Naive thymus-derived CD8-positive, alpha-beta T cell (primary cell): ENCODE measurements at regions of chr5 and their contacts with region 1.

Region 1: GRCh38 chr5:157253547-157253946 is 12.4 kb upstream of the CYFIP2 start:
- DNase-seq: peak in 1 of 10 donors; percentile 15
- ATAC-seq: no peak
- H3K4me3 Mint-ChIP-seq: peak overlapping the region; percentile 40 to 83 (median 72)
- H3K27ac Mint-ChIP-seq: peak overlapping the region; percentile 89 to 97 (median 92)
- H3K4me1 Mint-ChIP-seq: peaks cover 43 to 97% (median 94%) of the 10 kb centered on the region in 4 donors
- H3K27me3 Mint-ChIP-seq: no peaks in the 10 kb centered on the region

Region 2: DNA sequence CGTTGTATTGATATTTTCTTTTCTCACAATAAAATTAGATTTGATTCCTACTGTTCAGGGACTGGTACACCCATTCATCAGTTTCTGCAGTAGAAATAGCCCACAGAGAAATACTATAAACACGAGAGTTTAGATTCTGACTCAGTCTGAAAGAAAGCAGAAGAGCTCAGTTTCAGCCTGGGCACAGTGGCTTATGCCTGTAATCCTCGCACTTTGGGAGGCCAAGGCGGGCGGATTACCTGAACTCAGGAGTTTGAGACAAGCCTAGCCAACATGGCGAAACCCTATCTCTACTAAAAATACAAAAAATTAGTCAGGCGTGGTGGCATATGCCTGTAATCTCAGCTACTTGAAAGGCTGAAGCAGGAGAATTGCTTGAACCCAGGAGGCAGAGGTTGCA is 64.3 kb before region 1 on chr5:
- POLR2A ChIA-PET with region 1: interaction called, 15 read pairs
- DNase-seq: no peak
- ATAC-seq: no peak
- H3K4me3 Mint-ChIP-seq: peak overlapping the region; percentile 80 to 100 (median 96)
- H3K27ac Mint-ChIP-seq: peak overlapping the region; percentile 71 to 99 (median 94)
- H3K4me1 Mint-ChIP-seq: peaks cover 43 to 92% (median 85%) of the 10 kb centered on the region in 4 donors
- H3K27me3 Mint-ChIP-seq: no peaks in the 10 kb centered on the region

Region 3: GRCh38 chr5:157236423-157236822 is 17.1 kb before region 1 on chr5:
- POLR2A ChIA-PET with region 1: interaction called, 14 read pairs
- DNase-seq: no peak
- ATAC-seq: no peak
- H3K4me3 Mint-ChIP-seq: no peak overlapping the region
- H3K27ac Mint-ChIP-seq: peak overlapping the region in 8 of 10 donors; percentile 13 to 97 (median 71)
- H3K4me1 Mint-ChIP-seq: peaks cover 25 to 64% (median 55%) of the 10 kb centered on the region in 4 donors
- H3K27me3 Mint-ChIP-seq: no peaks in the 10 kb centered on the region

Region 4: GRCh38 chr5:157271740-157272271 is 18.3 kb after region 1 on chr5:
- POLR2A ChIA-PET with region 1: interaction called, 46 read pairs
- DNase-seq: peak; percentile 59 to 96 (median 92)
- ATAC-seq: peak; percentile 88 to 94
- H3K4me3 Mint-ChIP-seq: peak overlapping the region; percentile 76 to 96 (median 86)
- H3K27ac Mint-ChIP-seq: peak overlapping the region; percentile 93 to 100 (median 98)
- H3K4me1 Mint-ChIP-seq: peaks cover 48 to 96% (median 89%) of the 10 kb centered on the region in 4 donors
- H3K27me3 Mint-ChIP-seq: peaks cover 0 to 1% (median 0%) of the 10 kb centered on the region in 5 donors

Region 5: GRCh38 chr5:157308836-157309465 is 55.4 kb after region 1 on chr5:
- POLR2A ChIA-PET with region 1: interaction called, 26 read pairs
- DNase-seq: peak in 6 of 10 donors; percentile 27 to 69 (median 44)
- ATAC-seq: no peak
- H3K4me3 Mint-ChIP-seq: peak overlapping the region in 7 of 10 donors; percentile 22 to 68 (median 38)
- H3K27ac Mint-ChIP-seq: peak overlapping the region; percentile 86 to 98 (median 94)
- H3K4me1 Mint-ChIP-seq: peaks cover 34 to 83% (median 82%) of the 10 kb centered on the region in 4 donors
- H3K27me3 Mint-ChIP-seq: no peaks in the 10 kb centered on the region

Region 6: GRCh38 chr5:158718738-158719505 is 1465.4 kb after region 1 on chr5:
- POLR2A ChIA-PET with region 1: no interaction called
- DNase-seq: no peak
- ATAC-seq: no peak
- H3K4me3 Mint-ChIP-seq: no peak overlapping the region
- H3K27ac Mint-ChIP-seq: no peak overlapping the region
- H3K4me1 Mint-ChIP-seq: no peaks in the 10 kb centered on the region
- H3K27me3 Mint-ChIP-seq: peaks cover 0 to 3% (median 0%) of the 10 kb centered on the region in 5 donors